MCF 10A (cell line): ENCODE measurements at regions of chr17 and their contacts with region 1.

Region 1: GRCh38 chr17:75154195-75155106 is at the start of gene JPT1:
- DNase-seq: peak; percentile 99
- H3K4me3 Mint-ChIP-seq: peak within 1 kb of the TSS; percentile 92
- H3K27ac Mint-ChIP-seq: peak within 1 kb of the TSS; percentile 78
- H3K4me1 Mint-ChIP-seq: peaks cover 10% of the 10 kb centered on the region
- H3K27me3 Mint-ChIP-seq: no peaks in the 10 kb centered on the region
- CTCF ChIP-seq: no peak
- total RNA-seq, gene JPT1: 342 and 360 TPM in 2 replicates

Region 2: GRCh38 chr17:74961657-74962490 is 192.6 kb before region 1 on chr17:
- CTCF ChIA-PET with region 1: no interaction called
- POLR2A ChIA-PET with region 1: no interaction called
- intact Hi-C with region 1: no loop called
- DNase-seq: peak; percentile 89
- H3K4me3 Mint-ChIP-seq: no peak overlapping the region
- H3K27ac Mint-ChIP-seq: no peak overlapping the region
- H3K4me1 Mint-ChIP-seq: peaks cover 21% of the 10 kb centered on the region
- H3K27me3 Mint-ChIP-seq: no peaks in the 10 kb centered on the region
- CTCF ChIP-seq: peak; percentile 67

Region 3: GRCh38 chr17:75059369-75060345 is 94.8 kb before region 1 on chr17:
- CTCF ChIA-PET with region 1: no interaction called
- POLR2A ChIA-PET with region 1: no interaction called
- intact Hi-C with region 1: no loop called
- DNase-seq: no peak
- H3K4me3 Mint-ChIP-seq: no peak overlapping the region
- H3K27ac Mint-ChIP-seq: no peak overlapping the region
- H3K4me1 Mint-ChIP-seq: no peaks in the 10 kb centered on the region
- H3K27me3 Mint-ChIP-seq: no peaks in the 10 kb centered on the region
- CTCF ChIP-seq: peak; percentile 30

Region 4: DNA sequence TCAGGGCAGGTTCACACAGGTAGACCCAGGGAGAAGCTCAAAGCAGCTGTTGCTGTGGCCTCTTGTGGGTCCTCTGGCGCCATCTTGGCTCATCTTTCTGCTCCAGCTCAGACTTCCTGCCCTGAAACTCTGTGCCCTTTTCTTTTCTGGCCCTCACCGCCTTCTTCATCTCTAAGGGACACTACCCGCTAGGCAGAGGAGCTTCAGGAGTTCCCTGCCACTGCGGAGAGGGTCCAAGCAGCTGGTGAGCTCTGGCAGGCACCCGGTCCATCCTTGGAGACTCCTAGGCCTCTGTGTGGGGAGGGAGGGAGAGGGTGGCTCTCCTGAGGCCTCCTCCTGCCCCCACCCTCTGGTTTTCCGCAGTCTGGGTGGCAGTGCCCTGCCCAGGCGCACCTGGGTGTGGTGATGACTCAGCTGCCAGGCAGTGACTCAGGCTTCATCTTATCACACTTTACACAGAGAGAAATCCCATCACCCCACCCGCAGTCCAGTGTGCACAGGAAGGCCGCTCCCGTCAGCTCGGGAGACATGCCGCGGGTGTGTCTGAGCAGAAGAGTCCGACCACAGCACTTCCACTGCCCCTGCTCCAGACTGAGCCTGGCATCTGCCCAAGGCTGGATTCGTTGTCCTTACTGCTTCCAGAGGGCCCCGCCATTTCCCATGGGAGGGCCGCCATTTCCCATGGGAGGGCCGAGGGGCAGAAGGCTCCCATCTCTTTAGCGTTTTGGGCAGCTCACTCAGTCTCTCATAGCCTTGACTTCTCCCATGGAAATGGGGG is 30.2 kb before region 1 on chr17:
- CTCF ChIA-PET with region 1: interaction called, 4 read pairs
- POLR2A ChIA-PET with region 1: interaction called, 37 read pairs
- intact Hi-C with region 1: no loop called
- DNase-seq: peak; percentile 98
- H3K4me3 Mint-ChIP-seq: peak overlapping the region; percentile 66
- H3K27ac Mint-ChIP-seq: peak overlapping the region; percentile 95
- H3K4me1 Mint-ChIP-seq: peaks cover 18% of the 10 kb centered on the region
- H3K27me3 Mint-ChIP-seq: no peaks in the 10 kb centered on the region
- CTCF ChIP-seq: no peak

Region 5: GRCh38 chr17:75131280-75132017 is 23.0 kb before region 1 on chr17 and contains the start of gene NT5C:
- CTCF ChIA-PET with region 1: interaction called, 5 read pairs
- POLR2A ChIA-PET with region 1: interaction called, 37 read pairs
- intact Hi-C with region 1: no loop called
- DNase-seq: peak; percentile 72
- H3K4me3 Mint-ChIP-seq: peak within 1 kb of the TSS; percentile 84
- H3K27ac Mint-ChIP-seq: peak within 1 kb of the TSS; percentile 63
- H3K4me1 Mint-ChIP-seq: peaks cover 7% of the 10 kb centered on the region
- H3K27me3 Mint-ChIP-seq: no peaks in the 10 kb centered on the region
- CTCF ChIP-seq: peak; percentile 79
- total RNA-seq, gene NT5C: 105 and 113 TPM in 2 replicates

Region 6: DNA sequence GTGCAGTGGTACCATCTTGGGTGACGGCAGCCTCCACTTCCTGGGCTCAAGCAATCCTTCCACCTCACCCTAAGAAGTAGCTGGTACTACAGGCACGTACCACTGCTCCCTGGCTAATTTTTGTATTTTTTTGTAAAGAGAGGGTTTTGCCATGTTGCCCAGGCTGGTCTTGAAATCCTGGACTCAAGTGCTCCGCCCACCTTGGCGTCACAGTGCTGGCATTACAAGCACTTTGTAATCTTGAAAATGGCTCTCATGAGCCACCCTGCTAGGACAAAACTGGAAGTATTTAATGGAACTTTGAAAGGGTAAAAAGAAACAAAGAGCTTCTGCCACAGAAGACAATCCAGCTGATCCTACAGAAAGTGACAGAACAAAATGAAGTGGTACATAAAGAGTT is 19.1 kb after region 1 on chr17:
- CTCF ChIA-PET with region 1: interaction called, 5 read pairs
- POLR2A ChIA-PET with region 1: interaction called, 16 read pairs
- intact Hi-C with region 1: no loop called
- DNase-seq: no peak
- H3K4me3 Mint-ChIP-seq: no peak overlapping the region
- H3K27ac Mint-ChIP-seq: peak overlapping the region; percentile 75
- H3K4me1 Mint-ChIP-seq: no peaks in the 10 kb centered on the region
- H3K27me3 Mint-ChIP-seq: no peaks in the 10 kb centered on the region
- CTCF ChIP-seq: no peak

Region 7: GRCh38 chr17:75182569-75183450 is 28.4 kb after region 1 on chr17 and contains the start of gene SUMO2:
- CTCF ChIA-PET with region 1: no interaction called
- POLR2A ChIA-PET with region 1: interaction called, 19 read pairs
- intact Hi-C with region 1: no loop called
- DNase-seq: peak; percentile 92
- H3K4me3 Mint-ChIP-seq: peak within 1 kb of the TSS; percentile 80
- H3K27ac Mint-ChIP-seq: peak within 1 kb of the TSS; percentile 77
- H3K4me1 Mint-ChIP-seq: peaks cover 20% of the 10 kb centered on the region
- H3K27me3 Mint-ChIP-seq: no peaks in the 10 kb centered on the region
- CTCF ChIP-seq: peak; percentile 20
- total RNA-seq, gene SUMO2: 186 and 194 TPM in 2 replicates